ENCODE measurements at regions of chr1 and their contacts with region 1.

Region 1: DNA sequence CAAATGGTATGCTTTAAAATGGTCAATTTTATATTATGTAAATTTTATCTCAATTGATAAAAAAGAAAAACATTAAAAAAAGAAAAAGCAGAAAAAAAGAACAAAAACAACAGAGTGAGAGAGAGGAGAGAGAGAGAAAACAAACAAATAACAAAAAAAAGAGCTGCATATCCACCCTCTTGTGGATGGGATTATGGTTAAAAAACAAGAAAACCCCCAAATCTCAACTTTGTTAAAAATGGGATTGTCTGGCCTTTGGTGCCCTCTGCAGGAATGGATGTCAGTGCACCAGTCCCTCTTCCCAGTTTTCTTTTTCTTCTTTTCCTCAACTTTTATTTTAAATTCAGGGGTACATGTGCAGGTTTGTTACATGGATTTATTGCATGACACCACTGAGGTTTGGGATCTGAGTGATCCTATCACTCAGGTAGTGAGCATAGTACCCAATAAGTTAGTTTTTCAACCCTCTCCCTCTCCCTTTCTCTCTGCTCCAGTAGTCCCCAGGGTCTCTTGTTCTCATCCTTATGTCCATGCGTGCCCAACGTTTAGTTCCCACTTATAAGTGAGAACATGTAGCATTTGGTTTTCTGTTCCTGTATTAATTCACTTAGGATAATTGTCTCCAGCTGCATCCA is 28.1 kb downstream of the RNF187 start:
- DNase-seq: peak in 7 of 9 experiments; percentile 7 to 76 (median 33)
- ATAC-seq: peak; percentile 52
- H3K4me3 ChIP-seq: no peak overlapping the region
- H3K4me3 Mint-ChIP-seq: no peak overlapping the region
- H3K27ac ChIP-seq: no peak overlapping the region
- H3K27ac Mint-ChIP-seq: no peak overlapping the region
- H3K4me1 ChIP-seq: peaks cover 11% of the 10 kb centered on the region
- H3K4me1 Mint-ChIP-seq: peaks cover 15% of the 10 kb centered on the region
- H3K27me3 ChIP-seq: no peaks in the 10 kb centered on the region
- H3K27me3 Mint-ChIP-seq: peaks cover 10% of the 10 kb centered on the region
- CTCF ChIP-seq: peak; percentile 93

Region 2: DNA sequence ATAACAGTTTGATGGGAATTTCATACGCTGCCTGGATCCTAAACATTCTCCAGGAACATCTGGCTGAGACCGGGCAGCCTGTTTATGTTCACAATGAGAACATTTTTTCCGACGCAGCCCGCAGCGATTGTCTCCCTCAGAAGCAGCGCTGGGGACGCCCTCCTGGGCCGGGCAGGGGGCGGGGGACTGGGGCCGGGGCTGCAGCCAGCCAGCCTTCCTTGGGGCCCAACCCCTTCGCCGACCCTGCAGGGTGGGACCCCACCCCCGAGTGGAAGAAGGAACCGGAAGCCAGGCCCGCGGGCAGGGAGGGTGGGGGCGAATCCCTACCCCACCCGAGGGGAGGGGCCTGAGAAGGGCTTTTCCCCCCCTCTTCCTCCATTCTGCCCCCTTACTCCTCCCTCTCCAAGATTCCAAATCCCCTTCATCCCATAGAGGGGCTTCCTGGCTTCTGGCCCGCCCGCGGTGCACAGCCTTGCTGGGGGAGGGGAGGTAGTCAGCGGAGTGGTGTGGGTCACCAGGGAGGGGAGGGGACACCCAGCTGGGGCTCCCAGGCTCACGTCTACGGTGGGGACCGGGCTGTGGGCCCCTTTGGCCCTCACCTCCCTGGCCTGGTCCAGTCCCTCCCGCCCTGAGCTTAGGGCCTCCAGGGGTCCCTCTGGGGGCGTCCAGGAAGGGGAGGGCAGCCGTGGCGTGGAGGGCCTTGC is 628.2 kb before region 1 on chr1:
- CTCF ChIA-PET with region 1: no interaction called
- POLR2A ChIA-PET with region 1: no interaction called
- intact Hi-C with region 1: no loop called
- DNase-seq: peak in 7 of 9 experiments; percentile 21 to 68 (median 43)
- ATAC-seq: peak; percentile 41
- H3K4me3 ChIP-seq: peak overlapping the region; percentile 22 to 48
- H3K4me3 Mint-ChIP-seq: peak overlapping the region; percentile 71
- H3K27ac ChIP-seq: no peak overlapping the region
- H3K27ac Mint-ChIP-seq: peak overlapping the region; percentile 83
- H3K4me1 ChIP-seq: peaks cover 59% of the 10 kb centered on the region
- H3K4me1 Mint-ChIP-seq: peaks cover 41% of the 10 kb centered on the region
- H3K27me3 ChIP-seq: no peaks in the 10 kb centered on the region
- H3K27me3 Mint-ChIP-seq: no peaks in the 10 kb centered on the region
- CTCF ChIP-seq: no peak

Region 3: DNA sequence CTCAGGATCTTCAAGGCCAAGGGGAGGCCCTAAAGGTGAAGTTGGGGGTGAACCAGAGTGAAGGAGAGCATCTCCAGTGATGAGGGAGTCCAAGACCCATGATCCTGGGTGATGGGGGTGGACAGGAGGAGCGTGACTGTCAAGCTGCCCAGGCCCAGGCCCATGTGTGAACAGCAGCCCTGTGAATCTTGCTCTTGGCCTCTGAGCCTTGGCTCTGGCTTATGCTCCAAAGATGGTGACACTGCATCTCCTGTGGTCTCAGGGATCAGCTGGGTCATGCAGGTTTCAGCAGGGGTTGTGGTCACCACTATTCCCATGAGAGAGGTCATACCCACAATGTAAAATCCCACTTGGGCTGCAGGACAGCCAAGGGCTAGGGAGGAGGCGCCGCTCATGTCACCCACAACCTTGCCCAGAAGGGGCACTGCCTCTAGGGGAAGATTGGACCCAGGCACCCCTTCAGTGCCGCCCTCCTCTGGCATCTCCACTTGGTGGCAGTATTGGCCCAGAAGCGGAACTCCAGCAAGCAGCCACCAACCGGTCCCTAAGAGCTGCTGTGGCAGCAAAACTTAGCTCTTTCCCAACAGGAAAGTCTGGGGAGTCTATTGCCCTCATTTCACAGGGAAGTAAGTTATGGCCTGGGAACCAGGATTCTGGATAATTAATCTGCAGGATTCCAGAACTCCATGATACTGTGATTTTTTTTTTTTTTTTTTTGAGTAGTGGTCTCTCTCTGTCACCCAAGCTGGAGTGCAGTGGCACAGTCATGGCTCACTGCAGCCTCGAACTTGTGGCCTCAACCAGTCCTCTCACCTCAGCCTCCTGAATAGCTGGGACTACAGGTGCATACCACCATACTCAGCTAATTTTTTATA is 516.0 kb before region 1 on chr1:
- CTCF ChIA-PET with region 1: interaction called, 18 read pairs
- POLR2A ChIA-PET with region 1: no interaction called
- intact Hi-C with region 1: loop called in 1 of 2 experiments (anchors 2 kb)
- DNase-seq: peak; percentile 47 to 78 (median 68)
- ATAC-seq: peak; percentile 97
- H3K4me3 ChIP-seq: no peak overlapping the region
- H3K4me3 Mint-ChIP-seq: no peak overlapping the region
- H3K27ac ChIP-seq: no peak overlapping the region
- H3K27ac Mint-ChIP-seq: no peak overlapping the region
- H3K4me1 ChIP-seq: no peaks in the 10 kb centered on the region
- H3K4me1 Mint-ChIP-seq: no peaks in the 10 kb centered on the region
- H3K27me3 ChIP-seq: peaks cover 2 to 8% of the 10 kb centered on the region in 2 experiments
- H3K27me3 Mint-ChIP-seq: peaks cover 22% of the 10 kb centered on the region
- CTCF ChIP-seq: peak; percentile 77

Region 4: GRCh38 chr1:228378090-228378872 is 137.0 kb before region 1 on chr1:
- CTCF ChIA-PET with region 1: interaction called, 5 read pairs
- POLR2A ChIA-PET with region 1: no interaction called
- intact Hi-C with region 1: loop called (anchors 1 kb)
- DNase-seq: peak; percentile 19 to 68 (median 49)
- ATAC-seq: peak; percentile 75
- H3K4me3 ChIP-seq: peak overlapping the region; percentile 34 to 48
- H3K4me3 Mint-ChIP-seq: peak overlapping the region; percentile 80
- H3K27ac ChIP-seq: no peak overlapping the region
- H3K27ac Mint-ChIP-seq: no peak overlapping the region
- H3K4me1 ChIP-seq: peaks cover 4% of the 10 kb centered on the region
- H3K4me1 Mint-ChIP-seq: peaks cover 10% of the 10 kb centered on the region
- H3K27me3 ChIP-seq: no peaks in the 10 kb centered on the region
- H3K27me3 Mint-ChIP-seq: peaks cover 13% of the 10 kb centered on the region
- CTCF ChIP-seq: peak; percentile 43

Region 5: DNA sequence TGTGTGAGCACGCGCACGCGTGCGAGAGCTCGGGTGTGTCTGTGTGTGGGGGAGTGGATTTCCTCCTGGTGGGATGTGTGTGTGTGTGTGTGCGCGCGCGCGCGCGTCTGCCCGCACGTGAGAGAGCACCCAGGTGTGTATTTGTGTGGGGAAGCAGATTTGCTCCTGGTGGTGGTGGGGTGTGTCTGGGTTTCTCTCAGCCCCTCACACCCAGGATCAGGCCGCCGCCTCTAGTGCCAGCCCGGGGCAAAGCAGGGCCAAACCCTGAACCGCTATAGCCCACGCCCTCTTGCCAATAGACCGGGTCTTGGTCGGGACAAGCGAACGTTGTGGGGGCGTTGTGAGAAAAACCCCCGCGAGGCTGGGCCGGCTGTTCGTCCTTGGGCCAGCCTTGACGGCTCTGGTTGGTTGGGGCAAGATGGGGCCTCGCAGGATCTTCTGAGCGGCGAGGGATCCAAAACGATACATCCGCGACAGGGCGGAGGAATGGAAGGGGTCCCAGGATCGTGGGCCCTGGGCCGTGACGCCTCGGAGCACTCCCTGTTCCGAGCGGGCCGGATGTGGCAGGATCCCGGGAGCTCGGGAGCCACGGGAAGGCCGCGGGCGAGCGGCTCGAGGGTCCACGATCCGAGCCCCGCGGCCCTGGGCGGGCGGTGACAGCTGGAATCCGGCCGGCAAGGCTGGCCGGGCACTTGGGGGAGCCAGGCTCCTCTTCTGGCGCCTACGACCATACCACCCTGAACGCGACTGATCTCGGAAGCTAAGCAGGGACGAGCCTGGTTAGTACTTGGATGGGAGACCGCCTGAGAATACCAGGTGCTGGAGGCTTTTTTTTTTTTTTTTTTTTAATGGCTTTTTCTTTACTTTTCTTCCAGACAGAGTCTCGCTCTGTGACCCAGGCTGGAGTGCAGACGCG is 40.0 kb after region 1 on chr1:
- CTCF ChIA-PET with region 1: no interaction called
- POLR2A ChIA-PET with region 1: no interaction called
- intact Hi-C with region 1: no loop called
- DNase-seq: peak in 7 of 9 experiments; percentile 4 to 51 (median 24)
- ATAC-seq: no peak
- H3K4me3 ChIP-seq: no peak overlapping the region
- H3K4me3 Mint-ChIP-seq: no peak overlapping the region
- H3K27ac ChIP-seq: no peak overlapping the region
- H3K27ac Mint-ChIP-seq: no peak overlapping the region
- H3K4me1 ChIP-seq: no peaks in the 10 kb centered on the region
- H3K4me1 Mint-ChIP-seq: no peaks in the 10 kb centered on the region
- H3K27me3 ChIP-seq: peaks cover 0 to 3% of the 10 kb centered on the region in 2 experiments
- H3K27me3 Mint-ChIP-seq: no peaks in the 10 kb centered on the region
- CTCF ChIP-seq: no peak

Measured in CD8-positive, alpha-beta T cell (primary cell).